OCI-LY7 (cell line): ENCODE measurements at regions of chr3 and their contacts with region 1.

Region 1: GRCh38 chr3:102481050-102481449 is 46.2 kb downstream of the ZPLD1 start:
- DNase-seq: no peak
- H3K4me3 ChIP-seq: no peak overlapping the region
- H3K27ac ChIP-seq: no peak overlapping the region
- H3K4me1 ChIP-seq: no peaks in the 10 kb centered on the region
- CTCF ChIP-seq: no peak

Region 2: DNA sequence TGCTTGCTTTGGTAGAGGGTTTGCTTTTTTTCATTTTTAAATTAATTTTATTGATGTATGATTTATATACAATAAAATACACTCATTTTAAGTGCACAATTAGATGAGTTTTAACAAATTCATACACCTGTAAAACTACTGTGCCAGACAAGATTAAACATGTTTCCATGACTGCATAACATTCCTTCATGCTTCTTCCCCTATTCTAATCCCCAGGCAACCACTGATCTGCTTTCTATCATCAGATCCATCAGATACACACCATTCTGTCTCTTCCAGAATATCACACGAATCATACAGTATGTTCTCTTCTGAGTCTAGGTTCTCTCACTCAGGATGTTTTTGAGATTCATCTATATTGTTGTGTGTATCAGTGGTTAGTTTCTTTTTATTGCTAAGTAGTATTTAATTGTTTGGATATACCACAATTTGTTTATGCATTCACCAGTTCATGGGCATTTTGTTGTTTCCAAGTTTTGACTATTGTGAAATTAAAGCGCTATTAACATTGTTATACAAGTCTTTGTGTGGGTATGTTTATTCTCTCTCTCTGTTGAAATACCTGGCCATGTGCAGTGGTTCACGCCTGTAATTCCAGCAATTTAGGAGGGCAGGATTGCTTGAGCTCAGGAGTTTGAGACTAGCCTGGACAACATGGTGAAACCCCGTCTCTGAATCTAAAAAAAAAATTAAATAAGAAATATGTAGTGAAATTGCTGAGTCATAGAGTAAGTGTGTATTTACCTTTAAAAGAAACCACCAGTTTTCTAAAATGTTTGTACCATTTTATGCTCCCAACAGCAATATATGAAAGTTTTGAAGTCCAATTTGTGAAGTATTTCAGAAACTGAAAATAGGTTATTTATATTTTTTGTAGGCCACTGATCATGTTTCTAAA is 1778.7 kb before region 1 on chr3:
- CTCF ChIA-PET with region 1: no interaction called
- POLR2A ChIA-PET with region 1: no interaction called
- intact Hi-C with region 1: no loop called
- DNase-seq: no peak
- H3K4me3 ChIP-seq: no peak overlapping the region
- H3K27ac ChIP-seq: no peak overlapping the region
- H3K4me1 ChIP-seq: no peaks in the 10 kb centered on the region
- CTCF ChIP-seq: no peak

Region 3: DNA sequence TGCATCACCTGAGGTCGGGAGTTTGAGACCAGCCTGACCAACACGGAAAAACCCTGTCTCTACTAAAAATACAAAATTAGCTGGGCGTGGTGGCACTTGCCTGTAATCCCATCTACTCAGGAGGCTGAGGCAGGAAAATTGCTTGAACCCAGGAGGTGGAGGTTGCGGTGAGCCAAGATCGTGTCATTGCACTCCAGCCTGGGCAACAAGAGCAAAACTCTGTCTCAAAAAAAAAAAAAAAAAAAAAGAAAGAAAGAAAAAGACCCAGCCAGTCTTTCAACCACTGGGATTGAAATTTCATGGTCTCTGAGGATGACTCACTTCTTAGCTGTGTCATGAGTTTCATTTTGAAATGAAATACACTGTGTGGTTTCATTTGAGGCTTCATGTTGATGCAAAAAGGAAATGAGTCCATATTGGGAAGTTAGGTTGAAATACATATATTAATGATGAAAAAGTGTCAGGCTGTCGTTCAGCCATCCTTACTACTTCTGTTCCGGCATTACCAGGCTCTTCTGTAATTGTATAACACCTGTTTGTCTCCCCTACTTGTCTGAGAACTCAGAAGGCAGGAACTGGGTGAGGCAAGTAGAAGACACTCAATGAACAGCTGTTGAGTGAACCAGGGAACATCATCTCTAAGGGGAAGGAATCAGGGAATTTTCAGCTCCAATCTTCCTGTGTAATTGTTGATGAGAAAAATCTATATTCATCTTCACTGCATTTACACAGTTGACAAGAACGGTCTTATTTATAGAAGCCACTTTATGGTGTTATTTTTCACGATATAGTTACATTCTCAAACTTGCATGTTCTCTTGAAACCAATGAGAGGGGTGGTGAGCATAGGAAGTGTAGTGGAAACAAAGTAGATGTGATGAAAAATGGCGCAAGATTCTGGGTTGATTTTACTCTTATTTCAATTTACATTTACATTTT is 544.4 kb before region 1 on chr3:
- CTCF ChIA-PET with region 1: no interaction called
- POLR2A ChIA-PET with region 1: no interaction called
- intact Hi-C with region 1: no loop called
- DNase-seq: peak; percentile 70
- H3K4me3 ChIP-seq: peak overlapping the region; percentile 34
- H3K27ac ChIP-seq: peak overlapping the region; percentile 61
- H3K4me1 ChIP-seq: peaks cover 72% of the 10 kb centered on the region
- CTCF ChIP-seq: no peak

Region 4: GRCh38 chr3:102258666-102259227 is 222.3 kb before region 1 on chr3:
- CTCF ChIA-PET with region 1: no interaction called
- POLR2A ChIA-PET with region 1: no interaction called
- intact Hi-C with region 1: no loop called
- DNase-seq: no peak
- H3K4me3 ChIP-seq: no peak overlapping the region
- H3K27ac ChIP-seq: no peak overlapping the region
- H3K4me1 ChIP-seq: peaks cover 7% of the 10 kb centered on the region
- CTCF ChIP-seq: no peak

Region 5: DNA sequence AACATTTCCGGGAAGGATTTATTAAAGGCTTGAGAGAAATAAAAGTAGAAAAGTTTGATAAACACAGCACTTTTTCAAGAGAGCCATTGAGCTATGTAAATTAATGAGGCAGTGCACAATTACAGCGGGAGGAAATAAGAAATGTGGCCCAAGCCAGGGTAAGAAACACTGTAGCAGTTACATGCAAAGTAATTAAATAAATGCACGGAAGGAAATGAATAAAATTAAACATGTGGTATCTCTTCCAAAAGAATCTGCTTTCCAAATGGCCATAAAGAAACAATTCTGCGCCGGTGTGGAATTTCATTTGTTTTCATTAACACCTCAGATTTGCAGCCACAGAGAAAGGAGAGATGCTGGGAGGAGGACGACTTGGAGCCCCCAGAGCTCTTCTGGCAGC is 11.0 kb before region 1 on chr3:
- CTCF ChIA-PET with region 1: no interaction called
- POLR2A ChIA-PET with region 1: interaction called, 17 read pairs
- intact Hi-C with region 1: no loop called
- DNase-seq: no peak
- H3K4me3 ChIP-seq: no peak overlapping the region
- H3K27ac ChIP-seq: no peak overlapping the region
- H3K4me1 ChIP-seq: no peaks in the 10 kb centered on the region
- CTCF ChIP-seq: no peak

Region 6: GRCh38 chr3:102727340-102727739 is 246.3 kb after region 1 on chr3:
- CTCF ChIA-PET with region 1: no interaction called
- POLR2A ChIA-PET with region 1: no interaction called
- intact Hi-C with region 1: no loop called
- DNase-seq: no peak
- H3K4me3 ChIP-seq: no peak overlapping the region
- H3K27ac ChIP-seq: no peak overlapping the region
- H3K4me1 ChIP-seq: no peaks in the 10 kb centered on the region
- CTCF ChIP-seq: no peak